ENCODE measurements at regions of chr5 and their contacts with region 1.

Region 1: DNA sequence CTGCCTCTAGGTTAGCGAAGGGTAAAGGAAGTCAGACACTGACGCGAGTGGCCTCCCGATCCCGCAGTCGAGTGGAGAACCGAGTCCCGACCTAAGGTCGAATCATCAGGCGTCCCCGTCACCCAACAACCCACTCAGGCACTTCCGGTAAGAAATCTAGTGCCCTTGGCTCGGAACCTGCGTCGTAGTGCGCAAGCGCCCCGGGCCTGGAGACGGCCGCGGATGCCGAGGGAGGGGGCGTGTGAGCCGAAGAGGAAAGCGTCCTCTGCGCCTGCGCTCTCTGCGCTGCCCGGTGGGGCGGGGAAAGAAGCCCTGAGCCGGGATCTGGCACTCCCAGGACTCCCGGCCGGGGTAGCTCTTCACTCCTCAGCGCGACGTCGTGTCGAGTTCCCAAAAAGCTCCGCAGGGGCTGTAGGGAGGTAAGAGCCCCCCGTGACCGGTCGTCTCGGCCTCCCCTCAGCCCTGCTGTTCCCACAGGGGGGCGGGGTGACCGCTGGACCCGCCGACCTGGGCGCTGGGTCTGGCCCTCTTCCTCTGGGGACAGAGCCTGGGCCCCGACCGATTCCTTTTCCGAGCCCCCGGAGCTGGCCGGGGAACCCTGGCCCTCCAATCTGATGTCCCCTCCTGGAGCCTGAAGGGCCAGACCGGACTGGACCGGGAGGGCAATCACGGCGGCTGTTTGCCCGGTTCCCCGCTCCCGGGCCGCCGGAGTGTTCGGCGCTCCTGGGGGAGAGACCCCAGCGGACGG is at the start of gene ZFYVE16:
- DNase-seq: peak; percentile 98
- H3K4me3 Mint-ChIP-seq: peak within 1 kb of the TSS; percentile 92
- H3K27ac Mint-ChIP-seq: peak within 1 kb of the TSS; percentile 97
- H3K4me1 Mint-ChIP-seq: peaks cover 16% of the 10 kb centered on the region
- H3K27me3 Mint-ChIP-seq: no peaks in the 10 kb centered on the region
- total RNA-seq, gene ZFYVE16: 12.1 to 15.7 TPM

Region 2: GRCh38 chr5:79333852-79334557 is 1073.9 kb before region 1 on chr5:
- CTCF ChIA-PET with region 1: no interaction called
- POLR2A ChIA-PET with region 1: no interaction called
- intact Hi-C with region 1: no loop called
- DNase-seq: no peak
- H3K4me3 Mint-ChIP-seq: no peak overlapping the region
- H3K27ac Mint-ChIP-seq: no peak overlapping the region
- H3K4me1 Mint-ChIP-seq: no peaks in the 10 kb centered on the region
- H3K27me3 Mint-ChIP-seq: peaks cover 6% of the 10 kb centered on the region

Region 3: GRCh38 chr5:80487829-80488721 is 80.2 kb after region 1 on chr5 and contains the start of gene FAM151B:
- CTCF ChIA-PET with region 1: no interaction called
- POLR2A ChIA-PET with region 1: no interaction called
- intact Hi-C with region 1: loop called (anchors 5 kb)
- DNase-seq: peak; percentile 85
- H3K4me3 Mint-ChIP-seq: peak within 1 kb of the TSS; percentile 72
- H3K27ac Mint-ChIP-seq: no peak within 1 kb of the TSS
- H3K4me1 Mint-ChIP-seq: peaks cover 11% of the 10 kb centered on the region
- H3K27me3 Mint-ChIP-seq: peaks cover 7% of the 10 kb centered on the region
- total RNA-seq, gene FAM151B: 0.24 to 0.27 TPM

Measured in activated CD4-positive, alpha-beta memory T cell treated with anti-CD3 and anti-CD28 coated beads for 36 hours (primary cell).